ENCODE measurements at regions of chr19 and their contacts with region 1.

Region 1: GRCh38 chr19:38975214-38975860 is at the start of gene FBXO17:
- DNase-seq: peak; percentile 58
- ATAC-seq: peak; percentile 53
- H3K4me3 Mint-ChIP-seq: peak within 1 kb of the TSS; percentile 97
- H3K27ac Mint-ChIP-seq: peak within 1 kb of the TSS; percentile 98
- H3K4me1 Mint-ChIP-seq: peaks cover 15% of the 10 kb centered on the region
- H3K27me3 Mint-ChIP-seq: peaks cover under 1% of the 10 kb centered on the region; the same call in 1 of the 2 replicates
- CTCF ChIP-seq: no peak
- total RNA-seq, gene FBXO17: 16.8 to 22.2 TPM (median 18.6 TPM) in 3 replicates

Region 2: DNA sequence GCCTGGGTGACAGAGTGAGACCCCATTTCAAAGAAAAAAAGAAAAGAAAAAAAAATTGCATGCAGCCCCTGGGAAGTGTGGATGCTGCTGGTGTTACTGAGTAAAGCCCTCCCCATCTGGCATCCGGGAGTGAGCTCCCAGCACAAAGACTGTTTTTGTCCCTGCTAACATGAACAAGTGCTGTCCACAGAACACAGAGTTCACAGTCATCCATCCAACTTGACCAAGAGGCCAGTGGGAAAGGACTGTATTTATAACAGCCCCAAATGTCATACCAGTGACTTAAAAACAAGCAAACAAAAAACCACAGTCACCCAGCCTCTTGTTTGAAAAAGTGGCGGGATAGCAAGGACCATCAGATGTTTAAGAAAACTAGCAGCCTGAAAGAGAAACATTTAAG is 10.6 kb before region 1 on chr19:
- CTCF ChIA-PET with region 1: interaction called, 34 read pairs
- POLR2A ChIA-PET with region 1: interaction called, 3 read pairs
- DNase-seq: no peak
- ATAC-seq: no peak
- H3K4me3 Mint-ChIP-seq: no peak overlapping the region
- H3K27ac Mint-ChIP-seq: no peak overlapping the region; the same call in 1 of the 2 replicates
- H3K4me1 Mint-ChIP-seq: peaks cover 9% of the 10 kb centered on the region
- H3K27me3 Mint-ChIP-seq: no peaks in the 10 kb centered on the region
- CTCF ChIP-seq: no peak

Region 3: GRCh38 chr19:38989066-38989605 is 13.8 kb after region 1 on chr19:
- CTCF ChIA-PET with region 1: interaction called, 55 read pairs
- POLR2A ChIA-PET with region 1: interaction called, 4 read pairs
- DNase-seq: peak; percentile 68
- ATAC-seq: peak; percentile 98
- H3K4me3 Mint-ChIP-seq: no peak overlapping the region; the same call in 1 of the 2 replicates
- H3K27ac Mint-ChIP-seq: peak overlapping the region; percentile 69
- H3K4me1 Mint-ChIP-seq: peaks cover 8% of the 10 kb centered on the region
- H3K27me3 Mint-ChIP-seq: peaks cover 8% of the 10 kb centered on the region
- CTCF ChIP-seq: no peak

Region 4: DNA sequence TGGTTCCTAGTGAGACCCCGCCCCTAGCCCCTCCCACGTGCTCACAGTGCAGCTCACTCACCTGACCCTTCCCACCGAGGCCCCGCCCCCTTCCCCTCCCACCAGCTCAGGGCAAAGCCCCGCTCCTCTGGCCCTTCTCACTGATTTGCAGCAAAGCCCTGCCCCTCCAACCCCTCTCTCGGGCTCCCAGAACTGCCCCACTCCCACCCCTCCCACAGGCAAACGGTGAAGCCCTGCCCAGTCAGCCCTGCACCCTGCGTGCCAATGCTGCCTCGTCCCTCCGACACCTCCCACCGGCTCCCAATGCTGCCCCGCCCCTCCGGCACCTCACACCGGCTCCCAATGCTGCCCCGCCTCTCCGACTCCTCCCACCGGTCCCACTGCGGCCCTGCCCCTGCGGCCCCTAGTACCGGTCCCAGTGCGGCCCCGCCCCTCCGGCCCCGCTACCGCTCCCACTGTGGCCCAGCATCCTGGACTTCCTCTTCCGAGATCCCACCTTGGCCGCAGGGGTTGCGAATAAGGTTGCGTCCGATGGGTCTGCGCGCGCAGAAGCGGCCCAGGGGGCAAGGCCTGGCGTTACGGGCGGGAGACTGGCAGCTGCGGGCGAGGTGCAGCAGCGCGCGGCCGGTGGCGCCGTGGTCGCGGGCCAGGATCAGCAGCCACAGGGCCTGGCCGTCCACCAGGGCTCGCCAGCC is 56.2 kb after region 1 on chr19:
- CTCF ChIA-PET with region 1: interaction called, 23 read pairs
- POLR2A ChIA-PET with region 1: interaction called, 6 read pairs
- DNase-seq: peak; percentile 99
- ATAC-seq: peak; percentile 85
- H3K4me3 Mint-ChIP-seq: peak overlapping the region; percentile 67
- H3K27ac Mint-ChIP-seq: no peak overlapping the region
- H3K4me1 Mint-ChIP-seq: peaks cover 11% of the 10 kb centered on the region
- H3K27me3 Mint-ChIP-seq: peaks cover 8% of the 10 kb centered on the region
- CTCF ChIP-seq: no peak

Region 5: GRCh38 chr19:39038098-39038497 is 62.8 kb after region 1 on chr19:
- CTCF ChIA-PET with region 1: interaction called, 23 read pairs
- POLR2A ChIA-PET with region 1: no interaction called
- DNase-seq: peak; percentile 69
- ATAC-seq: peak; percentile 100
- H3K4me3 Mint-ChIP-seq: no peak overlapping the region
- H3K27ac Mint-ChIP-seq: no peak overlapping the region
- H3K4me1 Mint-ChIP-seq: peaks cover 7% of the 10 kb centered on the region; the same call in 1 of the 2 replicates
- H3K27me3 Mint-ChIP-seq: peaks cover 23% of the 10 kb centered on the region
- CTCF ChIP-seq: no peak

Region 6: DNA sequence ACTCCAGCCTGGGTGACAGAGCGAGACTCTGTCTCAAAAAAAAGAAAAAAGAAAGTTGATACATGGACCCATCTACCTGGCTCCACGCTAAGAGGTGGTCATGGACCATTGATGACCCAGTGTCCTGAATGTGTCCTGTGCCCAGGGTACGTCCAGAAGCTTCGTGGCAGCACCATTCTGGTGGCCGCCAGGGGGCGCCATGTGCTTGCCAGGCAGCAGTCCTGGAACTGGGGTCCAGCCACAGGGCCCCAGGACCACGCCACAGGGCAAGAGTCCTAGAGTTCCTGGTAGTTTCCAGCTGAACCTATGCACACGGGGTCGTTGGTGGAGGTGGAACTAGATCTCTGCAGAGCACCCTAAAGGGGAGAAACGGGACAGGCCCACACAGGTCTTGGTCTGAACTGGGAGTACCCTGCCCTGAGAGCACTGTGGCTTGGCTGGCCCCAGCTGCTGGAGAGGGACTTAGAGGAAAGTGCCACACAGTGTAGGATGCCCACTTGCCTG is 77.0 kb after region 1 on chr19:
- CTCF ChIA-PET with region 1: interaction called, 12 read pairs
- POLR2A ChIA-PET with region 1: no interaction called
- DNase-seq: peak; percentile 83
- ATAC-seq: peak; percentile 98
- H3K4me3 Mint-ChIP-seq: no peak overlapping the region
- H3K27ac Mint-ChIP-seq: no peak overlapping the region
- H3K4me1 Mint-ChIP-seq: no peaks in the 10 kb centered on the region
- H3K27me3 Mint-ChIP-seq: peaks cover 12% of the 10 kb centered on the region
- CTCF ChIP-seq: peak; percentile 96

Region 7: GRCh38 chr19:39314016-39314728 is 338.8 kb after region 1 on chr19:
- CTCF ChIA-PET with region 1: no interaction called
- POLR2A ChIA-PET with region 1: interaction called, 11 read pairs
- DNase-seq: no peak
- ATAC-seq: no peak
- H3K4me3 Mint-ChIP-seq: no peak overlapping the region
- H3K27ac Mint-ChIP-seq: no peak overlapping the region
- H3K4me1 Mint-ChIP-seq: peaks cover 13% of the 10 kb centered on the region
- H3K27me3 Mint-ChIP-seq: peaks cover 9% of the 10 kb centered on the region
- CTCF ChIP-seq: no peak